ENCODE measurements at regions of chr14 and their contacts with region 1.

Region 1: GRCh38 chr14:82872494-82872893 is 1338.8 kb upstream of the SEL1L start:
- DNase-seq: no peak

Region 2: DNA sequence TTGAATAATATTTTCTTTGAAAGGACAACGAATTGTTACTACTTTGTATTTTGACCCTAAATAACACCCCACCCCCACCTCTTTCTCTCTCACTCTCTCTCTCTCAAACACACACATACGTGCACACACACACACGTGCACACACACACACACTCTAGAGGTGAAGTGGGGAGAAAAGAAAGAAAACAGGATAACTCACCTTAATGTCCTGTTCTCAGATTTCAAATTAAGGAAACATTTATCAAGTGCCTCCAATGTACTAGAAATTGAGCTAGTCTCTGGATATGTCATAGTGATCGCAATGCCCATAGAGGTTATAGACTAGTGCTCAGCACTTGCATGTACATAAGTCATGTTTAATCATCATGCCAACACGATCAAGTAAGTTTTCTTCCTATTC is 144.8 kb after region 1 on chr14:
- intact Hi-C with region 1: no loop called
- DNase-seq: no peak

Region 3: GRCh38 chr14:83733670-83734069 is 861.2 kb after region 1 on chr14:
- intact Hi-C with region 1: loop called in 1 of 2 experiments (anchors 5 kb)
- DNase-seq: no peak

Measured in posterior vena cava (tissue), 2 donors.